ENCODE measurements at regions of chr16 and their contacts with region 1.

Region 1: DNA sequence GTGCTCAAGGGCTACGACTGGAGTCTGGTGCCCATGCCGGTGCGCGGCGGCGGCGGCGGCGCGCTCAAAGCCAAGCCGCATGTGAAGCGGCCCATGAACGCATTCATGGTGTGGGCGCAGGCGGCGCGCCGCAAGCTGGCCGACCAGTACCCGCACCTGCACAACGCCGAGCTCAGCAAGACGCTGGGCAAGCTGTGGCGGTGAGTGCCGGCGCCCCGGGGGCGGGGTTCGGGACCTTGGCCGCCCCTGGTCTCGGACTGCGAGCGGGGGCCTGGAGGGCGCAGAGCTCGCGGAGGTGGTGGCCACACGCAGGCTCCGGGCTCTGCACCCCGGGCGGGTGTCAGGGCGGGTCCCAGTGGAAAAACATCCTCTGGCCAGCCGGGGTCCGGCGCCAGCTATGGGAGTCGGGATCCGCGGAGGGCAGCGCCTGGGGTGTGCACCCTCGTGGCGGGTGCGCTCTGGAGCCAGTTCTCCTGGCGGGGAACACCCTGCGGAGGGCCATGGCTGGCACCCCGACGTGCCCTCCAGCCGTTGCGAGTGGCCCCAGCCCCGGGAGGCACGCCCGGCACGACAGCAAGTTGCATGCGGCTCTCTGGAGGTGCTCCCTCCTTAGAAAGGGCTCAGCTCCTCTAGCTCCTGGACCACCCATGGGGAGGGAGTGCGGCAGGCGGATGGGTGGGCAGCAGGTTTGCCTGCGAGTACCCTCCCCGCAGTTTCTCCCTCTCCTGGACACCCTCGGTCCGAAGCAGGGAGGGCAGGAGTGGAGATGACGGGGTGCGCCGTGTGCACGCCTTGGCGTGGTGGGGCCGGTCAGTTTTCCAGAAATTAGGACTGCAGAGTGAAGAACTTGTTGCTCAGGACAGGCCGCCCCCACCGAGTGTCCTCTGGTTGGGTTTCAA is 824 bp downstream of the SOX8 start:
- DNase-seq: peak in 11 of 42 donors; percentile 13 to 64 (median 41)

Region 2: GRCh38 chr16:129075-129474 is 853.3 kb before region 1 on chr16:
- intact Hi-C with region 1: no loop called
- DNase-seq: no peak

Region 3: DNA sequence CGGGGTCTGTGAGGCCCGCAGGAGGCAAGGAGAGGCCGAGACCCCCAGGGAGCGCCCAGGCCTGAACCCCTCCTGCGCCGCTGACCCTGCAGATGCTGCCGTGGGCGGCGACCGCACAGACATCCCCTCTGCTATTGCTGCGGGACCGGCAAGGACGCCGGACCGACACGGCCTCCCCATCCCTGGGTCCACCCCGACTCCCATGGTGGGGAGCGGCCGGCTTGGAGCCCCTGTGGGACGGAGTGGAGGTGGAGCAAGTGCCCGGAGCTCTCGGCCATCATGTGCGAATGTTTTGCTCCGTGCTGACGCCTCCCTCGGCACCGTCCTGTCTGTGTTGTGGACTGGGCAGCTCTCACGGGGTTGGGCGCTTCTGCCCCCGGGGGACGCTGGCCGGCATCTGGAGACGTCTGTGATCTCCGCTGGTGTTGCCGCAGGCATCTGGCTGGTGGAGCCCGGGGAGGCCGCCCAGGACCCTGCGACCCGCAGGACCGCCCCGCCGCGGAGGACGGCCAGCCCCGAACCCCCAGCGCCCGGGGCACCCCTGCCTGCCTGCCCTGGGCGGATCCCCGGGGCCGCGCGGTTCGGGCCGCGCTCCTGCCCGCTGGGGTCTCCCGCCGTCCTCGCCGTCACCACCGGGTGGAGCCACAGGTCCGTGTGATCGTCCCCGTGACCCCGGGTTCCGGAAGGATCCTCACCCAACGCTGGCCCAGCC is 169.0 kb before region 1 on chr16:
- intact Hi-C with region 1: loop called (anchors 5 kb)
- DNase-seq: peak; percentile 55 to 91 (median 81)

Region 4: GRCh38 chr16:1026057-1026783 is 43.8 kb after region 1 on chr16:
- intact Hi-C with region 1: loop called (anchors 5 kb)
- DNase-seq: peak; percentile 64 to 94 (median 82)

Region 5: DNA sequence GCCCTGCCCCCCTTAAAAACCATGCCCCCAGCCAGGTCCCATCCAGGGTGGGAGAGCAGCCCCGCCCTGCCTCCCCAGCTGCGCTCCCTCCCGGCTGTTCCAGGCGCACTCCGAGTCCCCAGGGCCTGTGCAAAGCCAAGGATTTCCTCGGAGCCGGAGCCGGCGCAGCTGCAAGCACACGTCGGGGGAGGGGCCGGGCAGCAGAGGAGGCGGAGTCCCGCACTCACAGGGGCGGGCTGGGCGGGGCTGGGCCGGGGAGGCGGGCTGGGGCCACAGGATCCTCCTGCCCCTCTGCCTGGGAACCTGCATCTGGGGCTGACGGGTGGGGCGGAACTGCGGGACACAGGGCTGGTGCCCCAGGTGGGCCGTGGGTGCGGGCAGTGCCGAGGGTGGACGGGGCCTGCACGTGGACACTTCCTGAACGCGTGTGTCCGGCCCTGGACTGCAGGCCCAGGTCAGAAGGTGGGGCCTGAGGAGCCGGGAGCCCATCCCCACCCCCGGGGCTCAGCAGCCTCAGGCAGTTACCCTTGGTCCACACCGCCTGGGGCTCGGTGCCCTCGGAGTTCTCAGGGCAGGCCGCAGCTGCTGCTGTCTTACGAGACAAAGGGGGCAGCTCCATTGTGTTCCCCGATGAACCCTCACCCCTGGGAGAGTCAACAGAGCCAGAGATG is 66.2 kb after region 1 on chr16:
- intact Hi-C with region 1: loop called (anchors 2 kb)
- DNase-seq: peak; percentile 78 to 95 (median 89)

Region 6: GRCh38 chr16:1152651-1153259 is 170.4 kb after region 1 on chr16 and contains the start of gene CACNA1H:
- intact Hi-C with region 1: no loop called
- DNase-seq: peak in 21 of 42 donors; percentile 23 to 69 (median 46)

Region 7: DNA sequence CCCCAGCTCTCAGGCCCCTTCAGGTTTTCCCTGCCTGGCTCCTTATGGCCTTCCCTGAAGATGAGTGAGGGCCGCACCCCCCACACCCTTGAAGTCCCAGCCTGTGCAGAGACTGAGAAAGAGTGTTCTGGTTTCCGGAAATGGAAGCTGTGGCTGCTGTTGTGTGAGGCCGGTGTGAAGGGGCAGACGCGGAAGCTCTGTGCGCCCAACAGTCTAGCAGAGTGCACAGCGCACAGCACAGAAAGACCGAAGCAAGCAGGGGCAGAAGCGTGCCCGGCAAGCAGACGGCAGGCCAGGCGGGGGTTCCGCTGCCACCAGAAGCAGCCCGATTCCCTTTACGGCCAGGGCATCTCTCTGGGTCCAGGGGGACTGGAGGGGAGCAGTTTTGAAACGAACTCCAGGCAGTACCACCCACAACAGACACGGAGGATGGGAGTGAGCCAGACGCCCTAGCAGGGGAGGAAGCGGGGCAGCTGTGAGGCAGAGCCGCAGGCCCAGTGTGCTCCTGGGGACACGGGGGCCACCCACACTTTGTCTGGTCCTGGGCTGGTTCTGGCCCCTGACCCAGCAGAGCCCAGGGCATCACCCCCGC is 225.9 kb after region 1 on chr16:
- intact Hi-C with region 1: no loop called
- DNase-seq: no peak

Measured in head of caudate nucleus (tissue), 42 donors.